Uterus (tissue), 4 donors: ENCODE measurements at regions of chr13 and their contacts with region 1.

Region 1: DNA sequence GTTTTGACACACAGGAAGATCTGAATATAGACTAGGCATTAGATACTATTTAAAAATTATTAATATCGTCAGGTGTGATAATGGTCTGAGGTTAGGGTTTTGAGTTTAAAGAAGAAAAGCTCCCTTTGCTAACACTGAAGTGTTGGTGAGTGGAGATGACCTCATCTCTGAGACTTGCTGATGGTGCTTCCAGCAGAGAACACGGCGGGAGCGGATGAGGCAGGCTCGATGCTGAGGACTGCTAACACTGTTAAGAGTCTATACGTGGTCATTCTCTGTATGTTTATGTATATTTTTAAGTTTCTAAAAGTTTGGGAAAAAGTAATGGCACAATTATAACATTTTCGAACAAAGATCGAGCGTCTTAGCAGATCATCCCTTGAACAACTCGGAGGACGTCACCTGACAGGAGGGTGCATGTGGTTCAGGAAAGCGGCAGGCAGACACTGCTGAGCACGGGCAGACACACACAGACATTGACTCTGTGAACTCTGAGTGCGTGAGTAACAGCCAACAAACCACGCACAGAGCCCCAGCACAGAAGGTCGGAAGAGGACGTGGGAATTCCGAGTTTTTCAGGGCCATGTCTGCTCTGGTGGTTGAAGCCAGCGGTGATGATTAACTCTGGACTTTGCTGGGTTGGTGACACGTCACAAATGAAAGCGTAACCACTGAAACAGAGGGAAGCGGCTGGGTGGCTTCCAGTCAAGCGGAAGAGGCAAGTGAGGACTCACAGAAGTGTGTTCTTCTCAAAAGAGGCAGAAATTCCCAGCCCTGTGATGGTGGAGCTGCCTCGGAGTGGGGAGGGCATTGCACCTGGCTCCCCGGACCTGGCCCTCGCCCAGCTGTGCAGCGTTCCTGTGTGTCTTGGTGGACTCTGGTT is 91.9 kb upstream of the TEX29 start:
- DNase-seq: no peak
- H3K4me3 ChIP-seq: no peak overlapping the region
- H3K27ac ChIP-seq: no peak overlapping the region
- H3K4me1 ChIP-seq: peaks cover 0 to 6% of the 10 kb centered on the region in 2 donors
- H3K27me3 ChIP-seq: no peaks in the 10 kb centered on the region
- CTCF ChIP-seq: no peak
- POLR2A ChIP-seq: no peak

Region 2: DNA sequence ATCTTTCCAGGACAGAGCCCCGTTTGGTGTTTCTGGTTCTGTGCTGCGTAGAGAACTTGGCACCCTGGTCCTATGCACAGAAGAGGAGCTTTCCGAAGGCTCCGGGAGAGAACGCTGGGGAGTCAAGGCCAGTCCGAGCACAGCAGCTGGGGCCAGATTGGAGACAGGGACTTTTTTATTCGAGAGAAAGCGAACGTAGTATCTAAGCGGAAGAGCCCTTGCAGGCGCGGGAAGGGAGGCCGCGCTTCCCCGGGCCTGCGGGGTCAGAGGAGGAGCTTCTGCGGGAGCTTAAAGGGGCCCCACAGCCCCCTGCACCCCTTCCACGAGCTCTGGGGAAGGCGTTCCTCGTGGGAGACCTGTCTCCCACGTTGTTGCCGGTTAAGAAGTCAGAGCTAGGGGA is 162.0 kb before region 1 on chr13:
- intact Hi-C with region 1: loop called (anchors 10 kb)
- DNase-seq: no peak
- H3K4me3 ChIP-seq: no peak overlapping the region
- H3K27ac ChIP-seq: no peak overlapping the region
- H3K4me1 ChIP-seq: no peaks in the 10 kb centered on the region
- H3K27me3 ChIP-seq: no peaks in the 10 kb centered on the region
- CTCF ChIP-seq: no peak
- POLR2A ChIP-seq: no peak